Heart left ventricle (tissue), 16 donors: ENCODE measurements at regions of chr1 and their contacts with region 1.

Region 1: DNA sequence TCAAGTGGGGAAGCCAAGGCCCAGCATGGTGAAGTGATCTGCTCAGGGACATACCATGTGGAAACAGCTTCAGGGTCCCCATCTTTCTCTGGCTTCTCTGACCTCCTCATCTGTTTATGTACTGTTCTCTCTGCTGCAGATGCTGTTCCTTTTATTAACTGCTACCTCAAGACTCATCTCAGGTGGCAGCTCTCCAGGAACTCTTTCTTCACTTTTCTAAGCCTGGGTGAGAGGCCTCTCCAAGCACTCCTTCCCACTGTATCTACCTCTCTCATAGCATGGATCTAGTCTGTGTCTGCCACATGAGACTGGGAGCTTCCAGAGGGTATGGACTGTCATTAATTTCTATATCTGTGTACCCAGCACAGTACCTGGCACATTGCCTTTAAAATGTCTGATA is 73.4 kb upstream of the PPM1J start:
- DNase-seq: no peak
- ATAC-seq: no peak
- H3K4me3 ChIP-seq: no peak overlapping the region
- H3K27ac ChIP-seq: no peak overlapping the region
- H3K4me1 ChIP-seq: no peaks in the 10 kb centered on the region
- H3K27me3 ChIP-seq: no peaks in the 10 kb centered on the region
- CTCF ChIP-seq: no peak
- POLR2A ChIP-seq: no peak

Region 2: DNA sequence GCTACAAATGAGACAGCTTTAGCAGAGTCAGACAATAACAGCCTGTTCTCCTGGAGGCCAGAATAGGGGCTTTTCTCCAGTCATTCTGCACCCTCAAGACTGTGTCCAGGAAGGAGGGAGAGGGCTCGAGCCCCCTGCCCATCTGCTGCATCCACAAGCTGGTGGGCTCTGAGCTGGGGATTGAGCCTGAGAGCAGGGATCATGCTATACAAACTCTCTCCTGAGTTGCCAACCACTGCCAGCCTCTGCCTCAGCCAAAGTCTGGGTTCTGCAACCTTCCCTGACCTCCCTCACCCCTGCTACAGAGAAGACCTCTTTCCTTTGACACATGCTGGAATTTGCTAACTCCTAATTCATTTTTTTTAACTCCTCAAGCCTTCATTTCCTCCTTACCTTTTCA is 58.7 kb before region 1 on chr1:
- intact Hi-C with region 1: loop called in 1 of 10 experiments (anchors 5 kb)
- DNase-seq: no peak
- ATAC-seq: no peak
- H3K4me3 ChIP-seq: no peak overlapping the region
- H3K27ac ChIP-seq: no peak overlapping the region
- H3K4me1 ChIP-seq: no peaks in the 10 kb centered on the region
- H3K27me3 ChIP-seq: peaks cover 0 to 9% (median 0%) of the 10 kb centered on the region in 9 donors
- CTCF ChIP-seq: no peak
- POLR2A ChIP-seq: no peak

Region 3: GRCh38 chr1:112748396-112748795 is 40.2 kb before region 1 on chr1:
- intact Hi-C with region 1: loop called in 1 of 10 experiments (anchors 5 kb)
- DNase-seq: no peak
- ATAC-seq: no peak
- H3K4me3 ChIP-seq: no peak overlapping the region
- H3K27ac ChIP-seq: no peak overlapping the region
- H3K4me1 ChIP-seq: peaks cover 0 to 14% (median 7%) of the 10 kb centered on the region in 12 donors
- H3K27me3 ChIP-seq: peaks cover 0 to 41% (median 23%) of the 10 kb centered on the region in 9 donors
- CTCF ChIP-seq: no peak
- POLR2A ChIP-seq: no peak

Region 4: DNA sequence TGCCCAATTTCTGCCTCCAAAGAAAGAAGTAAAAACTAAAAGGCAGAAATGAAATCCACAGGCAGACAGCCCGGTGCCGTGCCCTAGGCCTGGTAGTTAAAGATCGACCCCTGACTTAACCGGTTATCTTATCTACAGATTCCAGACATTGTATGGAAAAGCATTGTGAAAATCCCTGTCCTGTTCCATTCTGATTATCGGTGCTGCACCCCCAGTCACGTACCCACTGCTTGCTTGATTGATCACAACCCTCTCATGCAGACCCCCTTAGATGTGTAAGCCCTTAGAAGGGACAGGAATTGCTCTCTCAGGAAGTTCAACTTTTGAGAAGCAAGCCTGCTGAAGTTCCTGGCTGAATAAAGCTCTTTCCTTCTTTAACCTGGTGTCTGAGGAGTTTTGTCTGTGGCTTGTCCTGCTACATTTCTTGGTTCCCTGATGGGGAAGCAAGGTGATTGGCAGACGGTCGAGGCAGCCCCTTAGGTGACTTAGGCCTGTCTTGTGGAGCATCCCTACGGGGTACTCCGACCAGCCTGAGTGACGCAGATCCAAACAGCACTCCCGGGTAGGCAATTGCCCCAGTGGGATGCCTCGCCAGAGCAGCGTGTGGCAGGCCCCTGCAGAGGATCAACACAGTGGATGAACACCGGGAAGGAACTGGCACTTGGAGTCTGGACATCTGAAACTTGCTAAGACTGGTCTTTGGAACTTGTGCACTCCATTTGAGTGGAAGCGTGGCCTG is 37.8 kb after region 1 on chr1:
- intact Hi-C with region 1: no loop called
- DNase-seq: no peak
- ATAC-seq: no peak
- H3K4me3 ChIP-seq: no peak overlapping the region
- H3K27ac ChIP-seq: no peak overlapping the region
- H3K4me1 ChIP-seq: peaks cover 0 to 6% (median 0%) of the 10 kb centered on the region in 12 donors
- H3K27me3 ChIP-seq: no peaks in the 10 kb centered on the region
- CTCF ChIP-seq: no peak
- POLR2A ChIP-seq: no peak